Activated CD4-positive, alpha-beta T cell treated with anti-CD3 and anti-CD28 coated beads, Interleukin-2, amount 10 ng/mL, durations not matched to agents 24 days and 14 days (primary cell): ENCODE measurements at regions of chr4 and their contacts with region 1.

Region 1: GRCh38 chr4:83012687-83013419 is 2.2 kb upstream of the LIN54 start:
- DNase-seq: peak; percentile 99
- H3K4me3 Mint-ChIP-seq: peak overlapping the region; percentile 92
- H3K27ac Mint-ChIP-seq: peak overlapping the region; percentile 89
- H3K4me1 Mint-ChIP-seq: peaks cover 40% of the 10 kb centered on the region
- H3K27me3 Mint-ChIP-seq: peaks cover 1% of the 10 kb centered on the region

Region 2: GRCh38 chr4:82428969-82429727 is 583.7 kb before region 1 on chr4:
- intact Hi-C with region 1: loop called (anchors 2 kb)
- DNase-seq: peak; percentile 98
- H3K4me3 Mint-ChIP-seq: peak overlapping the region; percentile 96
- H3K27ac Mint-ChIP-seq: peak overlapping the region; percentile 99
- H3K4me1 Mint-ChIP-seq: peaks cover 61% of the 10 kb centered on the region
- H3K27me3 Mint-ChIP-seq: no peaks in the 10 kb centered on the region

Region 3: DNA sequence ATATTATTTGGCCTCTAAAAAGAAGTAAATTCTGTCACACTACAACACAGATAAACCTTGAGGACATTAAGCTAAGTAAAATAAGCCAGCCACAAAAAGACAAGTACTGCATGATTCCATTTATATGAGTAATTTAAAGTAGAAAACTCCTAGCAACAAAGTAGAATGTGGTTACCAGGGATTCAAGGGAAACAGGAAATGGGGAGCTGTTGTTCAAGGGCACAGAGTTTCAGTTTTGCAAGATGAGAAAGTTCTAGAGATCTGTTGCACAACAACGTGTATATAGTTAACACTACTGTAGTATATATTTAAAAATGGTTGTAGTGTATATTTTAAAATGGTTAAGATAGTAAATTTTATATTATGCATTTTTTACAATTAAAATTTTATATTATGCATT is 147.3 kb before region 1 on chr4:
- intact Hi-C with region 1: loop called (anchors 1 kb)
- DNase-seq: peak; percentile 84
- H3K4me3 Mint-ChIP-seq: peak overlapping the region; percentile 39
- H3K27ac Mint-ChIP-seq: peak overlapping the region; percentile 87
- H3K4me1 Mint-ChIP-seq: peaks cover 34% of the 10 kb centered on the region
- H3K27me3 Mint-ChIP-seq: no peaks in the 10 kb centered on the region

Region 4: DNA sequence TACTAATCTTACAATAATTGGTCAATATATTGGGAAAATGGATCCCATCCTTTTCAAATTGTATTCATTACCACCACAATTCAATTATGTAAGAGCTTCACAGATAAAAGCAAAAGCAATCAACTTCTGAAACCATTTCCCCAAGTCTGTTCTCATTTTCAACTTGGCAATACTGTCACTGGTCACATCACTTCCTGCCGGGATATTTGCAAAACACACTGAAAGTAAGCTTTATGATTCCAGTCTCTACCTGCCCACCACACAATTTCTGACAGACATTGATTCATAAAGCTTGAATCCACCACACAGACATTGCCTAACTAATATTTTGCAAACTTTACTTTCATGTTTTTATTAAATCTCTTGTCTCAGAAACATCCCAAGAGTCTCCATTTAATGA is 55.8 kb before region 1 on chr4:
- intact Hi-C with region 1: loop called (anchors 2 kb)
- DNase-seq: peak; percentile 51
- H3K4me3 Mint-ChIP-seq: no peak overlapping the region
- H3K27ac Mint-ChIP-seq: peak overlapping the region; percentile 0
- H3K4me1 Mint-ChIP-seq: peaks cover 13% of the 10 kb centered on the region
- H3K27me3 Mint-ChIP-seq: no peaks in the 10 kb centered on the region

Region 5: DNA sequence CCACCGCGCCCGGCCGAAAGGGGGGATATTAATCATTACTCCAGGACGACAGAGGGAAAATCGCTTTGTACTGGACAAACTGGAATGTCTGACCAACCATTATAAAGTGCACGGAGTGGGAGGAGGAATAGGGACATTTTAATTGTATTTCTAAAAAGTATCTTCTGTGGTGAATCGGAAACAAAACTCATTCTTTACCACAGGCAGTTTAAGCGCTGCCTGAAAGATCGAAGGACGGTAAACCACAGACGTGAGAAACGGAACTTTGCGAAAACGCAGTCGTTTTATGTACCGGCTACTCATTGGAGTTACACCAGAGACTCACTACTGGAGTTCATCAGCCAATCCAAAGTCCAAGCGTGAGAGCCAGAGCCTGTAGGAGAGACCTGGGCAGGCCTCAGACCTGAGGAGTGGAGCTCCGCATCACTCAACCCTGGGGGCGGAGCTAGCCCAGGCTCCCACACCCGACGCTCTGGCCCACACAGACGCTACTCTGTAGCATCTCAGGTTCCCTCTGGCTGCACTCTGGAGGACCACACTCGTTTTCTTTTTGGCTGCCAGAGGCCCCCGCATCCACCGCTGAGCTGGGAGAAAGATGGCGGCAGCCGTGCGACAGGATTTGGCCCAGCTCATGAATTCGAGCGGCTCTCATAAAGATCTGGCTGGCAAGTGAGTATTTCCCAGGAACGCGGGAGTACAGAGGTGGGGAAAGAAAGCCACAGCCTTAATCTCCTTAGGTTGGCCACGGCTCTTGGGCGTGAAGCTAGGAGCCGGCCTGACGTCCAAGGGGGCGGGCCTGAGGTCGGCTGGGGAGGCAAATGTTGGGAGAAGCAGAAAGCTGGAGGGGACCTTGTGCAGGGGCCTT is 22.0 kb after region 1 on chr4 and contains the start of gene COPS4:
- intact Hi-C with region 1: loop called (anchors 1 kb)
- DNase-seq: peak; percentile 98
- H3K4me3 Mint-ChIP-seq: peak within 1 kb of the TSS; percentile 90
- H3K27ac Mint-ChIP-seq: peak within 1 kb of the TSS; percentile 98
- H3K4me1 Mint-ChIP-seq: peaks cover 16% of the 10 kb centered on the region
- H3K27me3 Mint-ChIP-seq: peaks cover 6% of the 10 kb centered on the region
- total RNA-seq, gene COPS4: 36.5 and 37.5 TPM in 2 replicates

Region 6: DNA sequence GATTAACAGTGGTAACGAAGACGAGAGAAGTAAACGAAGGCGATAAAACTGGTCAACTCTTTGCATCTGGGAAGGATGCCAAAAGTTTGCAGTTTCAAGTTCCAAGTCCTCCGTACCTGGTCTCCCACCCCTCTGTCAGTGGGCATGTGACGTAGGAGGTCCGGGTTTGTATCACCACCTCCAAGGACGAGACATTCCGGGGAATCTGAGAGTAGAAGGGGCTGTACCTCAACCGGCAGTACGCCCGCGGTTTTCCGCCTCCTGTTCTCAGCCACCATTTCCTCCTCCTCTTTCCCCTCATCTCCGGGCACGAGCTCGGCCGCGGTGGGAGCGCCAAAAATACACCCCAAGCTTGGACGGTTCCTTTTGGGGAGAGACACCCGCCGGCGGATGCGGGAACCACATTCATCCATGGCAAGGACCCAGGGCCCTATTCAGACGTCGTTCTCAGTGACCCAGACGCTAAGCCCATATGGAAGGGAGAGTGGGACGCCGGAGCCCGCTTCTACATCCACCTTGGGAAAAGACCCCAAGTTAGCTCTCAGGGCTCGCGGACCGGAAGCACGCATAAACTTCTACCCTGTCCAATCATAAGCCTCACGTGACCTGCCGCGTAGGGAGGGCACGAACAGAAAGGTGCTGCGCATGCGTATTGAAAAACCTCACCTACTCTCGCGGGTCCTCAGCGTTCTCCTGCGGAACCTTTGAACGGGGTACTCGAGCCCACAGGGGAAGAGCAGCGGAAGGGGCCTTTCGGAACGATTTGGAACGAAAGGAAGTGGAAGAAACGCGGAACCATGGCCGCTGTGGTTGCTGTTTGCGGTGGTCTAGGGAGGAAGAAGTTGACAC is 442.7 kb after region 1 on chr4 and contains the starts of genes HELQ and MRPS18C:
- intact Hi-C with region 1: loop called (anchors 1 kb)
- DNase-seq: peak; percentile 98
- H3K4me3 Mint-ChIP-seq: peak within 1 kb of the TSS; percentile 99
- H3K27ac Mint-ChIP-seq: peak within 1 kb of the TSS; percentile 100
- H3K4me1 Mint-ChIP-seq: peaks cover 26% of the 10 kb centered on the region
- H3K27me3 Mint-ChIP-seq: no peaks in the 10 kb centered on the region
- total RNA-seq, gene HELQ: 9.1 and 11.4 TPM in 2 replicates
- total RNA-seq, gene MRPS18C: 83.9 and 86.6 TPM in 2 replicates